Posterior cingulate gyrus (tissue), 11 donors: ENCODE measurements at regions of chr5 and their contacts with region 1.

Region 1: GRCh38 chr5:149834246-149834855 is 104.2 kb downstream of the PPARGC1B start:
- DNase-seq: peak in 4 of 10 donors; percentile 35 to 56 (median 47)

Region 2: GRCh38 chr5:149960272-149961185 is 126.2 kb after region 1 on chr5 and contains the start of gene SLC26A2:
- intact Hi-C with region 1: loop called (anchors 1 kb)
- DNase-seq: peak; percentile 96 to 100 (median 98)

Region 3: DNA sequence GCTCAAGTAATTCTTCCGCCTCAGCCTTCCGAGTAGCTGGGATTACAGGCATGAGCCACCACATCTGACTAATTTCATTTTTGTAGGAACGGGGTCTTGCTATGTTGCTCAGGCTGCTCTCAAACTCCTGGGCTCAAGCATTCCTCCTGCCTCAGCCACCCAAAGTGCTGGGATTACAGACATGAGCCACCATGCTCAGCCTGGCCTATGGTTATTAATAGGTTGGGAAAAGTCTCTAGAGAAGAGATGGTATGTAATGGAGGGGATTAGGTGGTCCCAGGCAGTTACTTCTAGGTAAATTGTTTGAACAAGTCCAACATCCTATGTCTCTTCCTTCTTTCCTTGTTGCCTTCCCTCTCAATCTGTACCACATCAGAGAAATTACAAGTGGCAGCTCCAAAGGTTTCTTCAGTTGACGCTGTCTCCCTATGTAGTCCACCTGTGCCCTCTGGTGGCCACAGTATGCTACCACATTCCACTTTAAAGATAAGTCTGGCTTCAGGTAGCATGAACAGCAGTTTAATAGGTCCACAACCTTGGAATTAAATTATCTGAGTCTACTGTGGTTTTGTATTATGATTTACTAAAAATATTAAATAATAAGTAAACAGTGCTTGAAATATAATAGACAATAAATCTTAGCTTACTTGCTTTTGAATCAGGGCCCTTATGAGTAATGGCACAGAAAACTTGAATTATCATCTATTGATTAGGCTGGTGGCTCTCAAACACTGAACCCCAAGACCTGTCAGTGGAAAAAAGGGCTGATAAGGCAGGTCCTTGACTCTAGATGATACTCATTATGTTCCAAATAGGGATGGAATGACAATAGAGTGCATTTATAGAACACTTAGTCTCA is 156.4 kb after region 1 on chr5:
- intact Hi-C with region 1: loop called (anchors 2 kb)
- DNase-seq: peak in 7 of 10 donors; percentile 37 to 91 (median 66)

Region 4: GRCh38 chr5:150217873-150218692 is 383.7 kb after region 1 on chr5:
- intact Hi-C with region 1: loop called (anchors 10 kb)
- DNase-seq: peak; percentile 73 to 98 (median 89)